CD14-positive monocyte (primary cell): ENCODE measurements at regions of chr6 and their contacts with region 1.

Region 1: GRCh38 chr6:31680840-31681671 is at the start of gene LY6G5C:
- DNase-seq: peak; percentile 74 to 79 (median 76)
- H3K4me3 ChIP-seq: peak within 1 kb of the TSS; percentile 41 to 76 (median 65)
- H3K4me3 Mint-ChIP-seq: peak within 1 kb of the TSS; percentile 84 to 91
- H3K27ac ChIP-seq: peak within 1 kb of the TSS in 1 of 2 donors; percentile 17
- H3K27ac Mint-ChIP-seq: peak within 1 kb of the TSS; percentile 14 to 79 (median 72)
- H3K4me1 ChIP-seq: peaks cover 26 to 28% of the 10 kb centered on the region in 2 donors
- H3K4me1 Mint-ChIP-seq: peaks cover 37% of the 10 kb centered on the region
- H3K27me3 ChIP-seq: peaks cover 0 to 4% of the 10 kb centered on the region in 2 donors
- H3K27me3 Mint-ChIP-seq: peaks cover 8 to 10% (median 10%) of the 10 kb centered on the region in 3 donors
- CTCF ChIP-seq: peak; percentile 72
- polyA plus RNA-seq, gene LY6G5C: 4.8 to 7.3 (median 5.8) TPM

Region 2: DNA sequence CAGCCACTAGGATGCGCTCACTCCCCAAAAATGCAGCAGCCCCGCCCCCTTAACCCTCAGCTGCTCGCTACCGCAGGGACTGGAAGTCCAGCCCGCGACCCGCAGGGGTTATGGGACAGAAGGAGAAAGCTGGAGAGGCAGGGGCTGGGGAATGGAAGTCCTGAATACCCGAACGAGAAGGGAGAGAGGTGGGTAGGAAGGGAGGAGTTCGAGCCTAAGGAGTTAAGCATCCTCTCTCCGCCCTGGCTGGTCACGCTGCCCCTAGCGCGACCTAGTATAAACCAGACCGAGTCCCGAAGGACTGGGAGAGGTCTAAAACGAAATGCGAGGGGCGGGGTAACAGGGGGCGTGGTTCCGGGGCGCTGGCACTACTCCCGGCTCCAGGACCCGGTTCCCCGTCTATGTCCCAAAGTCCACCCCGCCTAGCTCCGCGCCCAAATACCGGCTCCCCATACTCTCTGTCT is 48.5 kb after region 1 on chr6:
- intact Hi-C with region 1: loop called in 1 of 2 experiments (anchors 2 kb)
- DNase-seq: peak; percentile 75 to 83 (median 78)
- H3K4me3 ChIP-seq: peak overlapping the region; percentile 68 to 87 (median 81)
- H3K4me3 Mint-ChIP-seq: peak overlapping the region; percentile 96
- H3K27ac ChIP-seq: peak overlapping the region; percentile 94 to 96
- H3K27ac Mint-ChIP-seq: peak overlapping the region; percentile 96 to 99 (median 98)
- H3K4me1 ChIP-seq: peaks cover 76 to 90% of the 10 kb centered on the region in 2 donors
- H3K4me1 Mint-ChIP-seq: peaks cover 73% of the 10 kb centered on the region
- H3K27me3 ChIP-seq: no peaks in the 10 kb centered on the region
- H3K27me3 Mint-ChIP-seq: peaks cover 0 to 4% (median 4%) of the 10 kb centered on the region in 3 donors
- CTCF ChIP-seq: peak; percentile 80

Region 3: DNA sequence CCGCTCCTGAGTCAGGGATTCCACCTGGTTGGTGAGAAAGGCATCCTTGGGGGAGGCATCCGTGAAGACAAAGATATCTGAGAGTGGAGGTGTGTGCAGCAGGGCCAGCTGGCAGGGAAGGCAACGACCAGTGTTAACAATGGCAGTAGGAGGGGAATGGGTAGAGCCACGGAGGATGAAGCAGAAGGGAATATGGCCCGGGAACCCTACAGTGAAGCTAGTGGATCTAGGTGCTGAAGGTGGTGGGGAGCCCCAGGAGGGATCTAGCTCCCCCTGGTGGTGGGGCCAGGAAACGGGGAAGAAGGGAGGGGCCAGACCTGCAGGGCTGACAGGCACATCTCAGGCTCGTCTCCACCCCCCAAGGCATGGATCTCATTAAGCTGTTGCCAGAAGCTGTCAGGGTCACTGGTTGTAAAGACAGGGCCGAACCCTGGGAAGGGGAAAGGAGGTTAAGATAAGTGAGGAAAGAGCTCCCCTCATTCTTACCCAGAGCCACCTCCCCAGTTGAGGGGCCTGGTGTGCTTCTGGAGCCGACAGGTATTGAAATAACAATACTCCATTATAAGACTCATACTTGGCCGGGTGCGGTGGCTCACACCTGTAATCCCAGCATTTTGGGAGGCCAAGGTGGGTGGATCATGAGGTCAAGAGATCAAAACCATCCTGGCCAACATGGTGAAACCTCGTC is 88.8 kb after region 1 on chr6:
- intact Hi-C with region 1: loop called in 1 of 2 experiments (anchors 5 kb)
- DNase-seq: peak; percentile 66 to 79 (median 79)
- H3K4me3 ChIP-seq: peak overlapping the region in 1 of 3 experiments; percentile 55
- H3K4me3 Mint-ChIP-seq: no peak overlapping the region
- H3K27ac ChIP-seq: peak overlapping the region; percentile 82 to 88
- H3K27ac Mint-ChIP-seq: peak overlapping the region; percentile 91 to 96 (median 94)
- H3K4me1 ChIP-seq: peaks cover 29 to 30% of the 10 kb centered on the region in 2 donors
- H3K4me1 Mint-ChIP-seq: peaks cover 29% of the 10 kb centered on the region
- H3K27me3 ChIP-seq: no peaks in the 10 kb centered on the region
- H3K27me3 Mint-ChIP-seq: peaks cover 0 to 11% (median 3%) of the 10 kb centered on the region in 3 donors
- CTCF ChIP-seq: peak; percentile 78

Region 4: GRCh38 chr6:31834434-31835198 is 153.6 kb after region 1 on chr6:
- intact Hi-C with region 1: loop called (anchors 5 kb)
- DNase-seq: peak; percentile 75 to 81 (median 77)
- H3K4me3 ChIP-seq: peak overlapping the region; percentile 83 to 89 (median 86)
- H3K4me3 Mint-ChIP-seq: peak overlapping the region; percentile 98 to 99
- H3K27ac ChIP-seq: peak overlapping the region; percentile 87 to 92
- H3K27ac Mint-ChIP-seq: peak overlapping the region; percentile 97 to 100 (median 98)
- H3K4me1 ChIP-seq: peaks cover 70 to 82% of the 10 kb centered on the region in 2 donors
- H3K4me1 Mint-ChIP-seq: peaks cover 56% of the 10 kb centered on the region
- H3K27me3 ChIP-seq: no peaks in the 10 kb centered on the region
- H3K27me3 Mint-ChIP-seq: no peaks in the 10 kb centered on the region
- CTCF ChIP-seq: no peak

Region 5: DNA sequence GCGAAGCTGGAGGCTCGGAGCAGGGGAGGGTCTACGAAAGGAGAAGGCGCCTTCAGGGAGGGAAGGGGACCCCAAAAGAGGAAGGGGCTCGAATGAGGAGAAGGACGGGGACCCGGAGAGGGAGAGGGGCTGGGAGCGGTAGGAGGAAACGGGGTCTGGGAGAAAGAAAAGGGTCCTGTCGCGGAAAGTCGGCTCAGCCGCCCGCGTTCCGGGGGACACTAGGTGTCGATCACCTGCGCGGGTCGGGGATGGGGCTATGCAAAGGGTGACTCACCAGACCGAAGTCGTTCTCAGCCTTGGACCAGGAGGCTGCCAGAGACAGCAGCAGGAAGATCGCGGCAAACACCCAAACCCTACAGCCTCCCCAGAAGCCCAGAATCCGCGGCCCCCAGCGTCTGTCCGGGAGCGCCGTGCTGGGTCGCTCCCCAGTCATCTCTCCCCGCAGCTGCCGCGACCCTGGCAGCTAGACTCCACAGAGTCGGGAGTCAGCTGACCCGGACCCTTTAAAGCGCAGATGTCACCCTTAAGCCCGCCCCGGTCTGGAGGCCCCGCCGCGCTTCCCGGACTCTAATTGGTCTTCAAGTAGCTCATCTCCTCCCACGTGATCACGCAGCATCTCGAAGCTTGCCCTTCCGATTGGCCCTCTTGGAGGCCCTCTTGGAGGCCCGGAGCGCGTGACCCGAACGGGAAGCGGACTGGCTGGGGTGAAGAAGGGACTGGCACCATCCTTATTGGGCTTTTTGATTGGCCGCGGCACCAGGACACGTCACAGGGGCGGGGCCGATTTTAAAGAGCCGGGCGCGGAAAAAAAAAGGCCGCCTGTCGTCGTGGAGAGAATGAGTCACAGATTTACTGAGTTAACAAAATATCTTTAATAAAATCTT is 181.5 kb after region 1 on chr6 and contains the start of gene NEU1:
- intact Hi-C with region 1: loop called in 1 of 2 experiments (anchors 5 kb)
- DNase-seq: peak; percentile 100
- H3K4me3 ChIP-seq: peak within 1 kb of the TSS; percentile 69 to 97 (median 85)
- H3K4me3 Mint-ChIP-seq: peak within 1 kb of the TSS; percentile 94 to 98
- H3K27ac ChIP-seq: peak within 1 kb of the TSS; percentile 72 to 89
- H3K27ac Mint-ChIP-seq: peak within 1 kb of the TSS; percentile 93 to 98 (median 96)
- H3K4me1 ChIP-seq: peaks cover 22 to 28% of the 10 kb centered on the region in 2 donors
- H3K4me1 Mint-ChIP-seq: peaks cover 23% of the 10 kb centered on the region
- H3K27me3 ChIP-seq: no peaks in the 10 kb centered on the region
- H3K27me3 Mint-ChIP-seq: peaks cover 0 to 2% (median 2%) of the 10 kb centered on the region in 3 donors
- CTCF ChIP-seq: no peak
- polyA plus RNA-seq, gene NEU1: 70.2 to 89.5 (median 81.8) TPM

Region 6: DNA sequence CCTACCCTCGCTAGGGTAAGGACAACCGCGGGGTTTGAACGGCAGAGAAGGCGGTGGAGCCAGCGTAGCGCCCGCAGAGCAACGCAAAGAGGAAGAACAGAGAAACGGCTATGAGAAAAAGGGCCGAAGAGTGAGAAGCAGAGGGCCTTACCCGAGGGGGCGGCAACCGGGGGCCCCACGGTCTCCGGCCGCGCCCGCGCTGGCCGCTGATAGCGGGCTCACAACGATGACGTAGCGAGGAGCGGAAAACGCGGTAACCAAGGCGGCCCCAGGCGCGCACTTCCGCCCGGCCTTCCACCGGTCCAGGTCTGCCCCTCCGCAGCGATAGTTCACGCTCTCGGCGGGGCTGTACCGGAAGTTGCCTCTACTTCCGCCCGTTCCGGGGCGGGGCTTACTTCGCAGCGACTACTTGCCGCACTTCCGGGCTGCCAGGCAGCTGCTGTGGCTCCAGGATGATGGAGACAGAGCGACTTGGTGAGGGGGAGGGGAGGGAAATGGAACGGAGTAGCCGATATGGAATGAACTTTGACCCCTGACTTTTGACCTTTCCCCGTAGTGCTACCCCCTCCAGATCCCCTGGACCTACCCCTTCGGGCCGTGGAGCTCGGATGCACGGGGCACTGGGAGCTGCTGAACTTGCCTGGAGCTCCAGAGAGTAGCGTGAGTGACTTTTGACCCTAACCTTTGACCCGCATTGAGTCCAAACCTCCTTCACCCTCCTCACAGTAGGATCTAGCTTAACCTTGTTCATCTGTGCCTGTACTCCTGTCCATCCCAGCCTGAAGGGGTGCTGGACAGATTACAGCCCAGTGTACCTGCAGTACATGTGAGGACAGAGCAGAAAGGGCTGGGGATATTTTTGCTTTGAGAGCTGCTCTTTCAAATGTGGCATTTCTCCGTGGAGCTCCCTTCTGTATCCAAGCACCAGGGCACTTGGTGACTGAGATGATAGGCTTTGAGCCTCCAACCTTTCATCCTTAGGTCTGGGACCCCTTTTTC is 278.0 kb after region 1 on chr6 and contains the starts of genes NELFE and SKIC2:
- intact Hi-C with region 1: loop called in 1 of 2 experiments (anchors 10 kb)
- DNase-seq: peak; percentile 99
- H3K4me3 ChIP-seq: peak within 1 kb of the TSS; percentile 91 to 100 (median 93)
- H3K4me3 Mint-ChIP-seq: peak within 1 kb of the TSS; percentile 91 to 97
- H3K27ac ChIP-seq: peak within 1 kb of the TSS; percentile 79 to 99
- H3K27ac Mint-ChIP-seq: peak within 1 kb of the TSS; percentile 97 to 99 (median 99)
- H3K4me1 ChIP-seq: peaks cover 17 to 22% of the 10 kb centered on the region in 2 donors
- H3K4me1 Mint-ChIP-seq: peaks cover 22% of the 10 kb centered on the region
- H3K27me3 ChIP-seq: no peaks in the 10 kb centered on the region
- H3K27me3 Mint-ChIP-seq: no peaks in the 10 kb centered on the region
- CTCF ChIP-seq: no peak
- polyA plus RNA-seq, gene NELFE: 48.8 to 74.4 (median 61.4) TPM
- polyA plus RNA-seq, gene SKIC2: 13.2 to 72.1 (median 13.2) TPM